Psoas muscle (tissue), 8 donors: ENCODE measurements at regions of chr5 and their contacts with region 1.

Region 1: GRCh38 chr5:37005946-37006540 is 129.5 kb downstream of the NIPBL start:
- DNase-seq: no peak
- ATAC-seq: peak in 2 of 4 donors; percentile 44 to 67
- H3K4me3 ChIP-seq: no peak overlapping the region
- H3K27ac ChIP-seq: no peak overlapping the region
- H3K4me1 ChIP-seq: no peaks in the 10 kb centered on the region
- H3K27me3 ChIP-seq: no peaks in the 10 kb centered on the region
- CTCF ChIP-seq: peak; percentile 69

Region 2: DNA sequence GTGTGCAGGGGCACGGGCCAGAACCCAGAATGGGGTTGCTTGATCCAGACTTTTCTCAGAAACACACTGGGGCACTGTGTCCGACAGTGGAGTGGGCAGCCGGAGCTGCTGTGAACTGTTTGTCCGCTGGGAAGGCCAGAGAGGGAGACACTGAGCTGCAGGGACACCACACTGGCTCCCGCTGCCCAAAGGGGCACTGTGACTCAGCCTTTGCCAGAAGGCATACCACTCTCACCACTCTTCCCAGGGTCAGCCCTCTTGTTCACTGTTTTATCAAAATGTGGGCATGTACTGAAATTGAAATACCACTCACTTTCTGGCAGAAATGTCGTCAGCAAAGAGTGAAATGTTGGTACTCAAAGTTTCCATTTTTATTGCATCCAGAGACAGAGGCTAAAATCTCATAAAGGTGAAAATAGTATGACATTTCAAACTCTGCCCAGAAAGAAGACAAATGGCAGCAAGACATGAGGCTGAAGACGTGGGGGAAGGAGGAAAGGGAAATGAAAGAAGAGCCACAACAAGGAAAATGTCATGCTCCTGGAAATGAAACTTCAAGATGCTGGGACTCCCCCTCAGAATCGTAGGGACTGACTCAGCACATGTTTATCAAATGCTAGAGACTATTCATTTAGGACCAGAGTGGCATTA is 1153.8 kb before region 1 on chr5:
- intact Hi-C with region 1: no loop called
- DNase-seq: peak in 1 of 2 donors; percentile 13
- ATAC-seq: no peak
- H3K4me3 ChIP-seq: no peak overlapping the region
- H3K27ac ChIP-seq: no peak overlapping the region
- H3K4me1 ChIP-seq: no peaks in the 10 kb centered on the region
- H3K27me3 ChIP-seq: no peaks in the 10 kb centered on the region
- CTCF ChIP-seq: no peak

Region 3: DNA sequence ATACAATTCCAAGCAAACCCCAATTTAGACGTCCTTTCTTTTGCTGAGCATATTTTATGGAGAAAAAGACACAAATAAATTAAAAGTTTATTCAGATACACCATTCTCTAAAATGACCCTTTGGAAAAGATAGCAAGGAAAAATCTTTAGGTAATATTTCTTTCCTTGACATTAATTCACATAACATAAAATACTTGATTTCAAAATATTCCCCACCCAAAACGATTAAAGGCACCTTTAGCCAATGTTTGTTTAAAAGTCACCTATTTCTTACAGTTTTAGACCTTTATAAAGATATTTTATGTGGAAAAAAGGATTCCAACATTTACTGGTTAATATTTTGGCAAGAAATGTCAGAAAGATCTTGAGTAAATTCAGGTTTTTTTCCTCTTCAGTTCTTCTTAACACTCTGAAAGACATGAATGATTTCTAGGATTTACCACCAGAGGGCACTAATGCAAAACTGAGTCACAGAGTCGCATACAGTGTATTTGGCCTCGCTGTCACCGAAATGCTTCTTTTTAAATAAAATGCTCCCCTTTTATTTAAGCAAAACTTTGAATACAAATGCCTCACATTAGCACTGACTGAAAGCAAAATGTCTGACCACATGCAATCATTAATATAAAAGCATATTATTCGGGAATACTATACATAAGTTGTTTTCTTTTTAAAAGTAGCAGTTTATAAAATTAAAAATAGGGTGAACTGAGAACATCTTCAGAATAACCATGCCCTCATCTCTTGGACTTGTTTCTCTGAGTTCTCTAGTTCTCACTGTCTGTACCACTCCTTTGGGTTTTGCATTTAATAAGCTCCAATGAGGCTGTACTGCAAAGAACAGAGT is 277.1 kb before region 1 on chr5:
- intact Hi-C with region 1: loop called (anchors 2 to 10 kb)
- DNase-seq: no peak
- ATAC-seq: peak in 2 of 4 donors; percentile 65 to 85
- H3K4me3 ChIP-seq: no peak overlapping the region
- H3K27ac ChIP-seq: no peak overlapping the region
- H3K4me1 ChIP-seq: no peaks in the 10 kb centered on the region
- H3K27me3 ChIP-seq: no peaks in the 10 kb centered on the region
- CTCF ChIP-seq: peak; percentile 72

Region 4: DNA sequence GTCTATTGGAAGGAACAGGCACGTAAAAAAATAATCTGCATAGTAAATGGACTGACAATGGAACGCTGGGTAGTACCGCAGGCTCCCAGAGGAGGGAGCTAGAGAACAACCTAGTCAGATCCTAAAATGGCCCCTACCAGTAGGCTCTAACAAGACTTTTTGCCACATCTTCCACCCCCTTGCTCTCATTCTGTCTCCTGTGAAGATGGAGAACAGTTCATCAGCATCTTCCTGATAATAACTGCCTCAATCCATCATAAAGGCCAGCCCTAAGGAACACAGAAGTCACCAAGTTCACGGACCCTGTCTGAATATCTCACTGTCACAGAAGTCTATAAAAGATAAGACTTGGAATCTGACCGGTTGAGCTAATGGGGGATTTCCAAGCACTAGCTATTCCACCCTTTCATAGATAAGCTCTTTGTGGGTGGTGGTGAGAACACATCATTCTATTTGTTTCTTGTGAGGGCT is 266.3 kb before region 1 on chr5:
- intact Hi-C with region 1: loop called (anchors 5 to 10 kb)
- DNase-seq: peak; percentile 46 to 66
- ATAC-seq: peak; percentile 47 to 71 (median 62)
- H3K4me3 ChIP-seq: no peak overlapping the region
- H3K27ac ChIP-seq: no peak overlapping the region
- H3K4me1 ChIP-seq: peaks cover 6% of the 10 kb centered on the region
- H3K27me3 ChIP-seq: peaks cover 0 to 3% (median 0%) of the 10 kb centered on the region in 3 donors
- CTCF ChIP-seq: peak; percentile 59

Region 5: GRCh38 chr5:36875790-36876388 is 130.2 kb before region 1 on chr5:
- intact Hi-C with region 1: loop called in 1 of 2 experiments (anchors 5 kb)
- DNase-seq: peak; percentile 81 to 89
- ATAC-seq: peak; percentile 82 to 85 (median 84)
- H3K4me3 ChIP-seq: peak overlapping the region; percentile 86
- H3K27ac ChIP-seq: peak overlapping the region; percentile 96
- H3K4me1 ChIP-seq: peaks cover 38% of the 10 kb centered on the region
- H3K27me3 ChIP-seq: no peaks in the 10 kb centered on the region
- CTCF ChIP-seq: peak; percentile 53